BJ (cell line): ENCODE measurements at regions of chr13 and their contacts with region 1.

Region 1: DNA sequence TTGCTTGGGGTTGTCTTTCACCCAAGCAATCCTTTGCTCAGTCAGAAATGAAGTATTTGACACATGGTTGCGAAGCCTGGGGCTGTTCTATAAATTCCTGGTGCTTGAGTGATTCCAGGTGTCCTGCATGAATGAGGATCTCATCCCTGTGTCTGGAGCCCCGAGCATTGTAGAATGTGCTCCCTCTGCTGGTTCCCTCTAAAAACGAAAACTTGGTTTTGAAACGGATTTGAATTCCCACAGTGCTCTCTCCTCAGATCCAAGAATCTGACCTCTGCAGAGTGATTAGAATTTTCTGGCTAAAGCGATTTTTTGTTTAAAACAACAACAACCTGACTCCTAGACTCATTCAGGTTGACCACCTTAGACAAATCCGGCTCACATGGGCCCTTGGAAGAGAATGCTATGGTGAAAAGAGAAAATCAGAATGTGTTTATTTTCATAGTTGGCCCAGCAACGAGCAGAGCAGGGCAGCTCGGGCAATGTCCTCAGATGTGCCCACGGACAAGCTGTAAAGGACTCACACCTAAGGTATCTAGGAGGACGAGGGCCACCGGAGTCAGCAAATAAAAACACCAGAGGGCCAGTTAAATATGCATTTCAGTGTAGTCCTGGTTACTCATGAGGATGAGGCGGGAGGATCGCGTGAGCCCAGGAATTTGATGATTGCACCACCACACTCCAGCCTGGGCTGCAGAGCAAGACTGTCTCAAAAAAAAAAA is 8.7 kb upstream of the ATP12A start:
- DNase-seq: peak; percentile 85
- H3K4me3 ChIP-seq: peak overlapping the region; percentile 21
- H3K27me3 ChIP-seq: peaks cover 1% of the 10 kb centered on the region
- CTCF ChIP-seq: peak; percentile 83

Region 2: GRCh38 chr13:24450530-24450929 is 221.0 kb before region 1 on chr13:
- CTCF ChIA-PET with region 1: no interaction called
- POLR2A ChIA-PET with region 1: no interaction called
- DNase-seq: peak; percentile 75
- H3K4me3 ChIP-seq: no peak overlapping the region
- H3K27me3 ChIP-seq: no peaks in the 10 kb centered on the region
- CTCF ChIP-seq: no peak

Region 3: DNA sequence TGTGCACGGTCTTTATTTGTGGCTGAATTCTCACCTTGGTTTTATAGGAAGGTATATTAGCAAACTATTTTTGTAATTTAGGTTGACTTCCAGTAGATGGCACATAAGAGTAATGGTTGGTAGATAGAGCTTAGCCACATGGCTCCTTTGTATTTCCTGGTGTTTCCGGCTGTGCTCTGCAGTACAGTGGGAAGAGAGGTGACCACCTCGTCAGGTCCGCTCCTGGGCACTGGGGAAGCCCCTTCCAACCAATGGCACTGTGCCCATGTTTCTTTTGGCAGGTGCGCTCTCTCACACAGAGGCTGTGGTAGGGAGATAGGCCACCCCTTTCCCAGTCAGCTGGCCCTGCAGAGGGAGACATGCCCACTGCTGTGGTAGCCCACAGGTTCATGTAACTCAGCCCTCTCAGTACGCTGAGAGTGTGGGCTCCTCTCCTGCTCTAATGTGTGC is 65.6 kb before region 1 on chr13:
- CTCF ChIA-PET with region 1: interaction called, 12 read pairs
- POLR2A ChIA-PET with region 1: no interaction called
- DNase-seq: no peak
- H3K4me3 ChIP-seq: no peak overlapping the region
- H3K27me3 ChIP-seq: no peaks in the 10 kb centered on the region
- CTCF ChIP-seq: peak; percentile 24; the same call in 1 of the 2 replicates

Region 4: GRCh38 chr13:24627099-24627714 is 44.3 kb before region 1 on chr13:
- CTCF ChIA-PET with region 1: interaction called, 13 read pairs
- POLR2A ChIA-PET with region 1: no interaction called
- DNase-seq: no peak
- H3K4me3 ChIP-seq: no peak overlapping the region
- H3K27me3 ChIP-seq: no peaks in the 10 kb centered on the region
- CTCF ChIP-seq: peak; percentile 83

Region 5: GRCh38 chr13:24638096-24638495 is 33.5 kb before region 1 on chr13:
- CTCF ChIA-PET with region 1: no interaction called
- POLR2A ChIA-PET with region 1: no interaction called
- DNase-seq: no peak
- H3K4me3 ChIP-seq: no peak overlapping the region
- H3K27me3 ChIP-seq: no peaks in the 10 kb centered on the region
- CTCF ChIP-seq: no peak

Region 6: DNA sequence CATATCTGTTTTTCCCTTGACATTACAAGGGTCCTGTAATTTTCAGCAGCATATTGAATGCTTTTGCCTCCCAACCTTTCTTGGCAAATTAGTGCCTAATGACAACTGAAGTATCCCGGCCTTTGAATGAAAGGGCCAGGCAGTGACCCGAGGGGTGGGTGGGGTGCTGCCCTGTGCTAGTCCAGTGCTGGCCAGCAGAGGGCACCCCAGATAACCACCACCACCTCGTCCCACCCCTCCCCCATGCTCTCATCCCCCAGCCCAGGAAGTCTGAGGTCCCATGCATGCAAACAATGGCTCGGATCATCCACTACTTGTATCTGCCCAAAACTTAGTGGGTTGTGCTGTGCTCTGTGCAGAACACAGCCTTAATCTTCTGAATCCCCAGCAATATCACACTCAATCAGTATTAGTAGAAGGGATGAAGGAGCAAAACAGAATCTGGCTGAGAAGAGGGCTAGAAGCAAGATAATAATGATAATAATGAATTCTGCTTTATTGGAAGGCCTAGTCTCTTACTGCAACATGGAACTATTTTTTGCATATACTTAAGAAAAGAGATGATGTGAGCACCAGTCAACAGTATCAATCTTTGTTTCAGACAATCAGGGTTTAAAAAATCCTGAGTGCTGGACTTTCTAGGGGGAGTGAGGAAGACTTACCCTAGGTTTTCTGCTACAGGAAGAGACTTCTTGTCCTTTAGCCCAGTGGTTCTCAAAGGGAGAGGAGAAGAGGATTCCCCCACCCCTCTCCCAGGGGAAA is 12.5 kb after region 1 on chr13:
- CTCF ChIA-PET with region 1: interaction called, 13 read pairs
- POLR2A ChIA-PET with region 1: no interaction called
- DNase-seq: no peak
- H3K4me3 ChIP-seq: no peak overlapping the region
- H3K27me3 ChIP-seq: peaks cover 17% of the 10 kb centered on the region
- CTCF ChIP-seq: peak; percentile 79